ENCODE measurements at regions of chr15 and their contacts with region 1.

Region 1: GRCh38 chr15:52208306-52208946 is 17.2 kb upstream of the GNB5 start:
- DNase-seq: peak; percentile 69 to 78 (median 72)
- H3K4me3 ChIP-seq: no peak overlapping the region
- H3K4me3 Mint-ChIP-seq: no peak overlapping the region
- H3K27ac ChIP-seq: no peak overlapping the region
- H3K27ac Mint-ChIP-seq: peak overlapping the region in 4 of 7 donors; percentile 43 to 84 (median 66)
- H3K4me1 ChIP-seq: no peaks in the 10 kb centered on the region
- H3K4me1 Mint-ChIP-seq: peaks cover 0 to 4% (median 1%) of the 10 kb centered on the region in 4 donors
- H3K27me3 ChIP-seq: no peaks in the 10 kb centered on the region
- H3K27me3 Mint-ChIP-seq: no peaks in the 10 kb centered on the region

Region 2: GRCh38 chr15:51768018-51768417 is 440.4 kb before region 1 on chr15:
- CTCF ChIA-PET with region 1: no interaction called
- POLR2A ChIA-PET with region 1: no interaction called
- intact Hi-C with region 1: no loop called
- DNase-seq: peak in 3 of 5 donors; percentile 3 to 15 (median 6)
- H3K4me3 ChIP-seq: no peak overlapping the region
- H3K4me3 Mint-ChIP-seq: peak overlapping the region in 3 of 8 donors; percentile 11 to 45 (median 13)
- H3K27ac ChIP-seq: no peak overlapping the region
- H3K27ac Mint-ChIP-seq: peak overlapping the region in 4 of 7 donors; percentile 63 to 93 (median 80)
- H3K4me1 ChIP-seq: peaks cover 9% of the 10 kb centered on the region
- H3K4me1 Mint-ChIP-seq: peaks cover 11 to 23% (median 14%) of the 10 kb centered on the region in 4 donors
- H3K27me3 ChIP-seq: no peaks in the 10 kb centered on the region
- H3K27me3 Mint-ChIP-seq: no peaks in the 10 kb centered on the region

Region 3: DNA sequence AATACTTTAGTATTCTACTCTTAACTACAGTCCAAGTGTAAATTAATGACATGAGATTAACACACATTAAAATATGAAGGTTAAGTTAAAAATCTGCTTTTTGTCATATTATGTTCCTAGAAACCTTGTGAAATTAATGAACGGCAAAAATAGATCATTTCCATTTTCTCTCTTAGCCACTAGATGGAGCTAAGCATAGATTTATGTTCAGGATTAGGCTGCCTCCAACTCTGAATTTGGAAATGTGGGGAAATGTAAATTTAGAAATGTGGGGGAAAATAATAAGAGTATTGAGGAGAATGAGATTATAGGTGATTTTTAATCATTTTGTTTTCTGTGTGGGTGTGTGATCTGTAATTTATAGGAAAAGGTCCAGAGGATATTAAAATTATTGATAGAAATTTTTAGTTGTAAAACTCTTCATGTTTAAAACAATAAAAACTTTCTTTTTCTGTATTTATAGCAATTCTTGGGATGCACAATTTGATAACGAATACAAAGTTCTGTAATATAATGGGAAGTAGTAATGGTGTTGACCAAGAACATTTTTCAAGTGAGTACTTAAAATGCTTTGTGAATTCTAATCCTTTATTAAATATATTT is 319.7 kb before region 1 on chr15:
- CTCF ChIA-PET with region 1: interaction called, 6 read pairs
- POLR2A ChIA-PET with region 1: no interaction called
- intact Hi-C with region 1: loop called (anchors 5 kb)
- DNase-seq: peak in 3 of 5 donors; percentile 8 to 20 (median 19)
- H3K4me3 ChIP-seq: no peak overlapping the region
- H3K4me3 Mint-ChIP-seq: no peak overlapping the region
- H3K27ac ChIP-seq: no peak overlapping the region
- H3K27ac Mint-ChIP-seq: peak overlapping the region in 2 of 7 donors; percentile 0 to 13
- H3K4me1 ChIP-seq: no peaks in the 10 kb centered on the region
- H3K4me1 Mint-ChIP-seq: peaks cover 6 to 16% (median 7%) of the 10 kb centered on the region in 4 donors
- H3K27me3 ChIP-seq: no peaks in the 10 kb centered on the region
- H3K27me3 Mint-ChIP-seq: no peaks in the 10 kb centered on the region

Region 4: GRCh38 chr15:52163321-52164190 is 44.9 kb before region 1 on chr15:
- CTCF ChIA-PET with region 1: interaction called, 38 read pairs
- POLR2A ChIA-PET with region 1: interaction called, 3 read pairs
- intact Hi-C with region 1: loop called (anchors 1 kb)
- DNase-seq: no peak
- H3K4me3 ChIP-seq: no peak overlapping the region
- H3K4me3 Mint-ChIP-seq: no peak overlapping the region
- H3K27ac ChIP-seq: no peak overlapping the region
- H3K27ac Mint-ChIP-seq: peak overlapping the region in 1 of 7 donors; percentile 20
- H3K4me1 ChIP-seq: peaks cover 4% of the 10 kb centered on the region
- H3K4me1 Mint-ChIP-seq: peaks cover 29 to 44% (median 36%) of the 10 kb centered on the region in 4 donors
- H3K27me3 ChIP-seq: no peaks in the 10 kb centered on the region
- H3K27me3 Mint-ChIP-seq: no peaks in the 10 kb centered on the region

Region 5: DNA sequence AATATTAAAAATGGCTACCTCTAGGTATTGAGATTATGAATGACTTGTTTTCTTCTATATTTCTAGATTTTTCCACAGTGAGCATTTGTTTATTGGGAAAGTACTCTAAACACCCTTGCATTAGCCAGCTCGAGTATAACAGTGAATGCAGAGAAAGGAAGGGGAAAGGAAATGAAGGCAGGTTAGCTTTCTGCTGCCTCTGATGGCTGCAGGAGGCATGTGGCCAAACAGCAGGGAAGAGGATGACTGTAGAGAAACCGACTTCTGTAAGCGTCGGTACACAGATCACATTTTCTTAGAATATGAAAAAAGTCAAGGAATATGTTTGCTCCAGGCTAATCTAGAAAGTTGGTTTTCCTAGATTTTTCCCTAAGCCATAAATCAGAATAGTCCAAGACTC is 37.0 kb before region 1 on chr15:
- CTCF ChIA-PET with region 1: interaction called, 38 read pairs
- POLR2A ChIA-PET with region 1: interaction called, 3 read pairs
- intact Hi-C with region 1: no loop called
- DNase-seq: peak in 2 of 5 donors; percentile 22 to 23
- H3K4me3 ChIP-seq: no peak overlapping the region
- H3K4me3 Mint-ChIP-seq: peak overlapping the region in 5 of 8 donors; percentile 17 to 74 (median 22)
- H3K27ac ChIP-seq: no peak overlapping the region
- H3K27ac Mint-ChIP-seq: peak overlapping the region in 4 of 7 donors; percentile 9 to 69 (median 28)
- H3K4me1 ChIP-seq: peaks cover 21% of the 10 kb centered on the region
- H3K4me1 Mint-ChIP-seq: peaks cover 40 to 67% (median 57%) of the 10 kb centered on the region in 4 donors
- H3K27me3 ChIP-seq: no peaks in the 10 kb centered on the region
- H3K27me3 Mint-ChIP-seq: no peaks in the 10 kb centered on the region

Region 6: DNA sequence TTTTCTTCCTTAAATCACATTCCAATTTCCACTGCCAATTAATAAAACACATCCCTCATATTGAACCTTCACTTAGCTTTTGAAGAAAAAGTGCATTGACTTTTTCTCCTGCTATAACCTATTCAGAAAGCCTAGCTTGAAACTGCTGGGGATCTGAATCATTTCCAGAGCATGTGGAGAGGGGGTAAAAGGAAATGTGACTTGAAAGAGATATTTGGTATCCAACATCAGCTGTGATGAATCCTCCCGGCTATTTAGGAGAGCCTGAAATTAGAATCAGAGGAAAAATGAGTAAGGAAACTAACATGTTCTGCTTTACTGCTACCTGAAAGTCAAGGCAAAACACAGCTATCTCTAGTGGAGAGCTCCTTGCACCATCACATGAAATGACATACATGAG is 14.6 kb before region 1 on chr15:
- CTCF ChIA-PET with region 1: interaction called, 13 read pairs
- POLR2A ChIA-PET with region 1: no interaction called
- intact Hi-C with region 1: no loop called
- DNase-seq: no peak
- H3K4me3 ChIP-seq: no peak overlapping the region
- H3K4me3 Mint-ChIP-seq: no peak overlapping the region
- H3K27ac ChIP-seq: no peak overlapping the region
- H3K27ac Mint-ChIP-seq: no peak overlapping the region
- H3K4me1 ChIP-seq: no peaks in the 10 kb centered on the region
- H3K4me1 Mint-ChIP-seq: no peaks in the 10 kb centered on the region
- H3K27me3 ChIP-seq: no peaks in the 10 kb centered on the region
- H3K27me3 Mint-ChIP-seq: peaks cover 0 to 2% of the 10 kb centered on the region in 2 donors

Region 7: GRCh38 chr15:52227456-52227855 is 19.0 kb after region 1 on chr15:
- CTCF ChIA-PET with region 1: interaction called, 23 read pairs
- POLR2A ChIA-PET with region 1: interaction called, 3 read pairs
- intact Hi-C with region 1: no loop called
- DNase-seq: peak; percentile 68 to 78 (median 69)
- H3K4me3 ChIP-seq: no peak overlapping the region
- H3K4me3 Mint-ChIP-seq: no peak overlapping the region
- H3K27ac ChIP-seq: no peak overlapping the region
- H3K27ac Mint-ChIP-seq: peak overlapping the region in 1 of 7 donors; percentile 60
- H3K4me1 ChIP-seq: peaks cover 8% of the 10 kb centered on the region
- H3K4me1 Mint-ChIP-seq: peaks cover 10 to 21% (median 14%) of the 10 kb centered on the region in 4 donors
- H3K27me3 ChIP-seq: no peaks in the 10 kb centered on the region
- H3K27me3 Mint-ChIP-seq: no peaks in the 10 kb centered on the region

Measured in CD4-positive, alpha-beta memory T cell (primary cell).